Posterior vena cava (tissue), 2 donors: ENCODE measurements at regions of chr1 and their contacts with region 1.

Region 1: GRCh38 chr1:165768513-165769394 is at the start of gene TMCO1:
- DNase-seq: peak; percentile 98
- total RNA-seq, gene TMCO1: 50.0 to 63.9 TPM

Region 2: DNA sequence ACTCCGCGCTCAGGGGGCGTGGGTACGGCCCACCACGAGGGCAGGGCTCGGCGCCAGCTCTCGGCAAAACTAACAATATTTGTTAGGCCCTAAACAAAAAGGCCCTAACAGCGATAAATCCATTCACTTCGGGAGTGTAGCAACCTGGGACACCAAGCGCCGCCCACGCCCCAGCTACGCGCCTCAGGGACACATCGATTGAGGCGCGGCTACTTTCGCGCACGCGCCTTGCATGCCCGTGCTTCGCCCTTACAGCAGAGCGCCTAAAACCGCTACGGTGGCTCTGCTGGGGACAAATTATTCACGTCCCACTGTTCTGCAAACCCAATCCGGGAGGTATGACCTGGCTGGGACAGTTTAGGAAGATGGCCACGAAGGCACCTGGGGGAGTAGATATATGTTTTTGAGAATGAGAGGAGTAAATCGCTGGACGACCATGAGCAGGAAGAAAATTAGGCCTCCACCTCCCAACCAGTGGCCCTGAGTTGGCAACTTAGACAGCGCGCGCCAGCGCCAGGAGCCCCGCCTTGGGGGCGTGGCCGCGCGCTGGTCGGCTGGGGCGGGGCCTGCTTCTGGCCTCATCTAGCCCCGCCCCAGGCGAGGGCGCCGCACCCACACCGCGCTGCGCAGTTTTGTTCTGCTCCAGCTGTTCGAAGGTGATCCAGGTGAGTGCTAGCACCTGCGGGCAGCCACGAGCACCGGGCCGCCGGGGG is 138.0 kb before region 1 on chr1 and contains the start of gene MGST3:
- intact Hi-C with region 1: loop called in 1 of 2 experiments (anchors 5 kb)
- DNase-seq: peak; percentile 98
- total RNA-seq, gene MGST3: 193 to 230 TPM

Region 3: DNA sequence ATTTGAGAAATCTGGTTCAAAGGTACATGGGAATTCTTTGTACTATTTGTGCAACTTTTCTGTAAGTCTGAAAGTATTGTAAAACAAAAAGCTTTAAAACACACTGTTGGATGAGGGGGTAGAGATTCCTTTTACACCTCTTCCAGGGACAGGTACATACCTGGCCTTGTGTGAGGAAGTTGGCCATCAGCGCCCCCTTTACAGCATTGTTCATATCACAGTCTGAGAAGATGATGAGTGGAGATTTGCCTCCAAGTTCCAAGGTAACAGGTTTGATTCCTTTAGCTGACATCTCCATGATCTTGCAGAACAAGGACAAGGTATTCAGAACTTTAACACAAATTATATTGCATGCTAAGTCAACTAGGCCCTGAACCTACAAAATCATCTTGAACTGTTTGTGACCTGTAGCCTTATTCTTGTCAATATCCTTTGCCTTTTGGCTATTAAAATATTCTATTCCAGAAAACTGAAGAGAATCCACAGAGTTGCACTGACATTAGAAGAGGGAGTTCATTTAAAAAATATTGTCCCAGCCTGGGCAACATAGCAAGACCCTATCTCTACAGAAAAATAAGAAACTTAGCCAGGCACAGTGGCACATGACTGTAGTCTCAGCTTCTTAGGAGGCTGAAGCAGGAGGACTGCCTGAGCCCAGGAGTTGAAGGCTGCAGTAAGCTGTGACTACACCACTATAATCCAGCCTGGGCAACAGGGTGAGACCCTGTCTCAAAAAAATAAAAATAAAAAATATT is 89.3 kb before region 1 on chr1:
- intact Hi-C with region 1: no loop called
- DNase-seq: no peak

Region 4: GRCh38 chr1:165827268-165828102 is 58.7 kb after region 1 on chr1 and contains the start of gene UCK2:
- intact Hi-C with region 1: loop called in 1 of 2 experiments (anchors 10 kb)
- DNase-seq: peak; percentile 92
- total RNA-seq, gene UCK2: 14.7 to 20.8 TPM

Region 5: DNA sequence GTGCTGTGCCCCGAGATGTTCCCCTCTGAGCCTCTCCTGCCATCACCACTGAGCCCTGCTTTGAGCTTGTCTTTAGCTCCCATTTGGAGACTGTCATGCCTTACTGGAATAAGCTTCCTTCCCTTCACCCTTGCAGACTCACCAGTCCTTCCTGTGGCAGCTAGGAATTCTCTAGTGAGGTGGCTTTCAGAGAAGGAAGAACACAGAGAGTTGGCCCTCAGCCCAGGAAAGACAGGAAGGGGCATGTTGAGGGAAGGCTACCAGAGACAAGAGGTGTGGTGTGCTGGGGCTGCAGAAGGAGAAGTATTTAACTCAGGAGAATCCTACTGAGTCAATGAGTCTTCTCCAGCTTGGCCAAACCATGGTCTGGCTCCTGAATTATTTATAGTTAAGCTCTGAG is 134.9 kb after region 1 on chr1:
- intact Hi-C with region 1: loop called in 1 of 2 experiments (anchors 10 kb)
- DNase-seq: no peak